ENCODE measurements at regions of chr1 and their contacts with region 1.

Region 1: GRCh38 chr1:213669964-213670691 is 317.6 kb upstream of the PROX1 start:
- DNase-seq: peak; percentile 20 to 78 (median 36)
- ATAC-seq: peak; percentile 89
- H3K4me3 ChIP-seq: no peak overlapping the region
- H3K4me3 Mint-ChIP-seq: peak overlapping the region; percentile 40
- H3K27ac ChIP-seq: no peak overlapping the region
- H3K27ac Mint-ChIP-seq: peak overlapping the region; percentile 88
- H3K4me1 ChIP-seq: peaks cover 13% of the 10 kb centered on the region
- H3K4me1 Mint-ChIP-seq: peaks cover 38% of the 10 kb centered on the region
- H3K27me3 ChIP-seq: no peaks in the 10 kb centered on the region
- H3K27me3 Mint-ChIP-seq: no peaks in the 10 kb centered on the region
- CTCF ChIP-seq: peak; percentile 49

Region 2: DNA sequence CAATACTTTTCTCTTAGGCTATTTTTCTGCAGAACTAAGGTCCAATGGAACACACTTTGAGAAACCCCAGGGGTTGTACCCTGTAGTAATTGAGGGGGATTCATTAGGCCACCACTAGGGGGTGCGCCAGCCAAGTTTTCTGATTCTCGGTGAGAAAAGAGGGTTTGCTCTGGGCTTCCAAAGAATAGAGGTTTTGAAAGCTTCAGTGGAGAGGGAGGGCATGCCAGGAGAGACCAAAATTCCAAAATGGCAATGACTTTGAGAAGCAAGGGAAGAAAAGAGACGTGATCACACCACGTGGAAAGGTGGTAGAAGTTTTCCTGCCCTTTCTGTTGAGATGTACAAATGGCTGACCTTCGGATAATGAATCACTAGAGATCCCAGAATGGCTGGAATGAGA is 295.8 kb before region 1 on chr1:
- CTCF ChIA-PET with region 1: no interaction called
- POLR2A ChIA-PET with region 1: no interaction called
- intact Hi-C with region 1: loop called in 1 of 2 experiments (anchors 1 kb)
- DNase-seq: peak; percentile 16 to 66 (median 42)
- ATAC-seq: no peak
- H3K4me3 ChIP-seq: no peak overlapping the region
- H3K4me3 Mint-ChIP-seq: no peak overlapping the region
- H3K27ac ChIP-seq: no peak overlapping the region
- H3K27ac Mint-ChIP-seq: no peak overlapping the region
- H3K4me1 ChIP-seq: no peaks in the 10 kb centered on the region
- H3K4me1 Mint-ChIP-seq: no peaks in the 10 kb centered on the region
- H3K27me3 ChIP-seq: no peaks in the 10 kb centered on the region
- H3K27me3 Mint-ChIP-seq: no peaks in the 10 kb centered on the region
- CTCF ChIP-seq: peak; percentile 77

Region 3: DNA sequence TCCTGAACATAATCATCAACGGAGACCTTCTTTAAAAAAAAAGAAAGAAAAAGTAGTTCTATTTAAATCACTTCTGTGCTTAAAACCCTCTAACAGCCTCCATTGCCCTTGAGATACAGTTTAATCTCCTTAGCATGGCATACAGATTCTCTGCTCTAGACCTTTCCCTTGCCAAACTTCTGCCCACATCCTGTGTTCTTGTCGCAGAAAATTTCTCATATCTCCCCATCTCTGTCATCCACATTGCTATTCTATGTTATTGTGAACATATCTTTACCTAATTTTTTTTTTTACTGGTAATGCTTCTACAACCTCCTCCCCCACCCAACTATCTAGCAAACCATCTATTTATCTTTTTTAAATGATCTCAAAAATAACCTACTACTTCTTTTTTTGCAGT is 182.0 kb after region 1 on chr1:
- CTCF ChIA-PET with region 1: no interaction called
- POLR2A ChIA-PET with region 1: interaction called, 3 read pairs
- intact Hi-C with region 1: loop called (anchors 2 to 10 kb)
- DNase-seq: peak in 7 of 14 experiments; percentile 12 to 75 (median 40)
- ATAC-seq: peak; percentile 93
- H3K4me3 ChIP-seq: no peak overlapping the region
- H3K4me3 Mint-ChIP-seq: no peak overlapping the region
- H3K27ac ChIP-seq: peak overlapping the region in 1 of 2 donors; percentile 67
- H3K27ac Mint-ChIP-seq: no peak overlapping the region
- H3K4me1 ChIP-seq: peaks cover 25% of the 10 kb centered on the region
- H3K4me1 Mint-ChIP-seq: peaks cover 9% of the 10 kb centered on the region
- H3K27me3 ChIP-seq: no peaks in the 10 kb centered on the region
- H3K27me3 Mint-ChIP-seq: no peaks in the 10 kb centered on the region
- CTCF ChIP-seq: no peak

Region 4: DNA sequence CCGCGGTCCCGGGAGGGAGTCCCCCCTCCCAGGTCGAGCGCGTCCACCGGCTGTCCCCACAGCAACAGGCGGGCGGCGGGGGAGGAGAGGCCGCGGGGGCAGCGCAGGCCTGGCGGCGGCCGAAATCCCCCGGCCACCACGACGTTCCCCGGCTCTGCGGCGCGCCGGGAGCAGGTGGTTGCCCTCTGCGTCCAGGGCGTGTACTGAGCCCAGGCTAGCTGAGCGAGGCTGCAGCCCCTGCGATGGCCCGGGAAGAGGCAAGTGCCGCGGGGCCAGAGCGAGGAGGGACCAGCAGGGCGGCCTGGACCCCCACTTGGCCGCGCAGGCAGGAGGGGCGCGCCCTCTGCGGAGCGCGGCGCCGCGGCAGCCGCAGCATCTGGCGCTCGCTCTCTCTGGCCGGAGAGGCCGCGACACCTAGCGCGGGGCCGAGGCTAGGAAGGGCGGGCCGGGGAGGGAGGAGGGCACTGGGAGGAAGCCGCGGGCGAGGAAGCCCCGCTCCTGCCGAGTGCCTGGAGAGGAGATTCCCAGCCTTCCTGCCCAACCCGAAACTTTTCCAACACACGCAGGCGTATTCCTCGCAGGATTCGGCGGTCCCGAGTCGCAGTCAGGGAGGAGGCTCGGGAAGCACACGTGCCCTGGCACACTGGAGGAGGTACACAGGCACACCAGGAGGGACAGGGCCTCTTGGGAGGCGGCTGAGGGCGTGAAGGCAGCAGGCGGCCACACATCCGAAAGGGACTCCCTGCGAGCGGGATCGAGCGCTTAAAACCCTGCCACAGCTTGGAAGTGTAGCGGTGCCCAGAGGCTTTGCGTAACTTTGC is 312.8 kb after region 1 on chr1:
- CTCF ChIA-PET with region 1: no interaction called
- POLR2A ChIA-PET with region 1: interaction called, 5 read pairs
- intact Hi-C with region 1: loop called (anchors 1 to 5 kb)
- DNase-seq: peak in 2 of 14 experiments; percentile 12 to 19
- ATAC-seq: no peak
- H3K4me3 ChIP-seq: no peak overlapping the region
- H3K4me3 Mint-ChIP-seq: no peak overlapping the region
- H3K27ac ChIP-seq: no peak overlapping the region
- H3K27ac Mint-ChIP-seq: no peak overlapping the region
- H3K4me1 ChIP-seq: peaks cover 33% of the 10 kb centered on the region
- H3K4me1 Mint-ChIP-seq: peaks cover 67% of the 10 kb centered on the region
- H3K27me3 ChIP-seq: peaks cover 80 to 98% of the 10 kb centered on the region in 2 experiments
- H3K27me3 Mint-ChIP-seq: peaks cover 91% of the 10 kb centered on the region
- CTCF ChIP-seq: no peak

Region 5: DNA sequence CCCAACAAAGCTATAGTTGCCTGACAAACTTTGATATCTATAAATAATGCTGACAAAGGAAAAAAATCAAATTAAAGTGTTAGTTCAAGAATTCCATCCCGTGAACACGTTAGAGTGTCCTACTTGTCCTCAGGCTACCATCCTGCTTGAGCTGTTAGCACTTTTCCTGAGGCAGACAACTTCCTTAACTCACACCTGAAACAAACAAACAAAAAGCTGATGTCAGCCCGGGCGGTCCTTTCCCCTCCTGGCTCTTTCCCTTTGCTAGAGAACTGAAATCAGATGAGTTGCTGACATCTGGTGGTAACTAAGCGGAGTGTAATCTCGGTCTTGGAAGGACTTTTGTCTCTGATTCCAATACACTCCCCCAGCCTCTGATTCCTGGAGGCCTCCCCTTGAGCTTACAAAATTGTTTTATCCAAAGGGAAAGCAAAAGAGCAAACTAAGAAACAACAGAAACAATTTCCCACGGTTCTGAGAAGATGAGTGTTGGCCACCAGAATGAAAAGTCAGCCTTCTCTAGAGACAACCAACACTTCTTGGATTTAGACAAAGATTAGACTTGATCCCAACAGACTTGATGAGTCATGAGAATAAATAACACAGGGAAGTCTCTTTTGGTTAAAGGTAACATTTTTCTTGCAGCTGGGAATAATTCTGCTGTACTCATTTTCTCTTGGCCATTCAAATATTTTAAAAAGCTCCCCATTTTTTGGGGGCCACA is 453.1 kb after region 1 on chr1:
- CTCF ChIA-PET with region 1: interaction called, 6 read pairs
- POLR2A ChIA-PET with region 1: no interaction called
- intact Hi-C with region 1: loop called (anchors 1 kb)
- DNase-seq: peak in 12 of 14 experiments; percentile 1 to 66 (median 13)
- ATAC-seq: peak; percentile 68
- H3K4me3 ChIP-seq: no peak overlapping the region
- H3K4me3 Mint-ChIP-seq: no peak overlapping the region
- H3K27ac ChIP-seq: no peak overlapping the region
- H3K27ac Mint-ChIP-seq: no peak overlapping the region
- H3K4me1 ChIP-seq: no peaks in the 10 kb centered on the region
- H3K4me1 Mint-ChIP-seq: peaks cover 14% of the 10 kb centered on the region
- H3K27me3 ChIP-seq: no peaks in the 10 kb centered on the region
- H3K27me3 Mint-ChIP-seq: peaks cover 4% of the 10 kb centered on the region
- CTCF ChIP-seq: peak; percentile 46